ENCODE measurements at regions of chr1 and their contacts with region 1.

Region 1: DNA sequence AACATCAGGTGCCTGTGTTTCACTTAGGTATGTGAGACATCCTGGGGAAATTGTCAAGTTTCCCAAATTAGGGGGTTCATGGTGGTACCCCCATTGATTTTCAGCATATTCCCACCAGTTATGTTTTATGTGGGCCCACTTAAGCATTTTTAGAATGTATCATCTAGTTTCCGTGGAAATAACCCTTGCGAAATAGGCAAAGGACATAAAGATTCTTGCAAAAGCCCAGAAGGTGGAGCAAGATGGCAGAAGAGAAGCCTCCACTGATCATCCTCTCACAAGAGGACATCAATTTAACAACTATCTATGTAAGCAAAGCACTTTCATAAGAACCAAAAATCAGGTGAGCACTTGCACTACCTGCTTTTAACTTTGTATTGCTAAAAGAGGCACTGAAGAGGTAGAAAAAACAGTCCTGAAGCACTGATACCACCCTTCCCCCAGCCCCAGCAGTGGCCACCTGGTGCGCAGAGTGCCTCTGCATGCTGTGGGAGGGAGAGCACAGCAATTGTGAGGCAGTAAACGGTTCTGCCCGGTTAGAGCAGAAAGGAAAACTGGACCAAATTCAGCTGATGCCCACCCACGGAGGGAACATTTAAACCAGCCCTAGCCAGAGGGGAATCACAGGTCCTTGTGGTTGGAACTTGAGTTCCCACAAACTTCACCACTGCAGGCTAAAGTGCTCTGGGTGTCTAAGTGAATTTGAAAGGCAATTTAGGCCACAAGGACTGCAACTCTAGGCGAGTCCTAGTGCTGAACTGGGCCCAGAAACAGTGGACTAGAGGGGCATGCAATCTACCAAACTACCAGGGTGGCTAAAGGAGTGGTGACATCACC is 23.2 kb downstream of the MCOLN2 start:
- DNase-seq: peak; percentile 41
- ATAC-seq: no peak
- H3K4me3 Mint-ChIP-seq: no peak overlapping the region
- H3K27ac Mint-ChIP-seq: peak overlapping the region; percentile 35
- H3K4me1 Mint-ChIP-seq: peaks cover 60% of the 10 kb centered on the region
- H3K27me3 Mint-ChIP-seq: no peaks in the 10 kb centered on the region

Region 2: DNA sequence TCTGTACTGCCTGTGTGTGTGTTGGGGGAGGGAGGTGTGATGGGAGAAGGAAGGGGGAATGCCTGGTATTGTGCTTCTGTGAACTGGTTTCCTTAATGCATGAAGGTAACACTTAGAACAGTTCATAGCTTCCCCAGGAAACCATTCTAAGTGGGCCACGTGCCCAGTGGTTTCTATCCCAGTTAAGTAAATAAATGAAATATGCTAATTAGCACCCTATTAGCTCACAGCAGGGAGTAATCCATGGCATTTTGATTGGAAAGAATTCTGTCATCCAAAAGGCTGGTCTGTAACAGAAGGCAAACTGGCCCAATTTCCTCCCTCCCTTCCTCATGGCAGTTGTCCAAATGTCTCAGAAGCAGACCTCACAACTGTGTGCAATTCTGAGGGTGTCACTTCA is 1174.1 kb before region 1 on chr1:
- CTCF ChIA-PET with region 1: no interaction called
- POLR2A ChIA-PET with region 1: no interaction called
- intact Hi-C with region 1: no loop called
- DNase-seq: no peak
- ATAC-seq: no peak
- H3K4me3 Mint-ChIP-seq: no peak overlapping the region
- H3K27ac Mint-ChIP-seq: no peak overlapping the region
- H3K4me1 Mint-ChIP-seq: no peaks in the 10 kb centered on the region
- H3K27me3 Mint-ChIP-seq: no peaks in the 10 kb centered on the region

Region 3: DNA sequence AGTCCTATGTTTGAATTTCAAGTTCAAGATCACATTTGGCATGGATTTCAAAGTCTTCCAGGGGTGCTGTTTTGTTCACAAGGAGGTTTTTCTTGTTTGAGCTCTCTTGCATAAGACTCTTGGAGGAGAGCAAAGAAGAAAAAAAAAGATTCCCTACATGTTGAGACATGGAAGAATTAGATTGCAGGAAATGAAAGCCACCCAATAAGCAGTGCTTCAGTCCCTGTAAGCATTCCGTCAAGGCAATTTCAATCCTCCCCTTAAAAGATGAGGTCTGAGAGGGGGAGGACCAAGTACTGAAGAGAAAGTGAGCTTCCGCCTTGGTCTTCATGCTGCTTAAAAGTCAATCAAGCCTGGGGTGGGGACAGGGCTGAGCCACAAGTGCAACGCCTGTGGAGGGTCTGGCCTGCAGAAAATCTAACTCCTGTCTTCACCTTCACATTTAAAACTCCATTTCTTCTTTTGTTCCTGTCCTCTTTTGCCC is 130.9 kb before region 1 on chr1:
- CTCF ChIA-PET with region 1: no interaction called
- POLR2A ChIA-PET with region 1: no interaction called
- intact Hi-C with region 1: no loop called
- DNase-seq: no peak
- ATAC-seq: no peak
- H3K4me3 Mint-ChIP-seq: no peak overlapping the region
- H3K27ac Mint-ChIP-seq: no peak overlapping the region
- H3K4me1 Mint-ChIP-seq: peaks cover 8% of the 10 kb centered on the region
- H3K27me3 Mint-ChIP-seq: no peaks in the 10 kb centered on the region

Region 4: DNA sequence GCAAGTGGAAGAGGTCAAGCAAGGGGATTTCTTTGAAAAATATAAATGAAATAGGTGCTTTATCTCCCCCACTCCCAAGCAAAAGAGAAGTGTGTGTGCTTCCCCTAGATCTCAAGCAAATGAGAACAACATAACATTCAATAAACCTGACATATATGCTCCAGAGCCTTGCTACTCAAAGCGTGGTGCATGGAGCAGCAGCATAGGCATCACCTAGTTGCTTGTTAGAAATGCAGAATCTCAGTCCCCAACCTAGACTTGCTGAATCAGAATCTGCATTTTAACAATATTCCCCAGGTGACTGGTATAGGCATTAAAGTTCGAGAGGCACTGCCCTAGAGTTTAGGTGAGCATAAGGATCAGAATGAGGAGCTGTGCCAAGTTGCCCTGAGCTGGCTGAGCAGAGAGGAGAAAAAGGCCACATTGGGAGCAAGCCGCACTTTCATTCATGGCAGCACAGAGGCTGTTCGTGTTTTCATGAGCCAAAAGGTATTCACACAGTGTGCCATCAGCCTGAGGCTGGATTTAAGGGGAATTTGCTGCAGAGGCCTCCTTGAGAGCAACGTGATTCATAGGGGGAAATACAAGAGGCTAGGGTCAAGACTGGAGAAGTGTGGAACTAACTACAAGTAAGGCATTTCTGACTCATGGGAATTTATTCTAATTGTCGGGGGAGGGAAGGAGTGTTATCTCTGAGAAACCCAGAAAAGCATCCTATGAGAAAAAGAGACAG is 66.5 kb before region 1 on chr1:
- CTCF ChIA-PET with region 1: no interaction called
- POLR2A ChIA-PET with region 1: no interaction called
- intact Hi-C with region 1: no loop called
- DNase-seq: no peak
- ATAC-seq: peak; percentile 68
- H3K4me3 Mint-ChIP-seq: no peak overlapping the region
- H3K27ac Mint-ChIP-seq: no peak overlapping the region
- H3K4me1 Mint-ChIP-seq: peaks cover 7% of the 10 kb centered on the region
- H3K27me3 Mint-ChIP-seq: no peaks in the 10 kb centered on the region

Region 5: GRCh38 chr1:84985365-84985764 is 11.6 kb after region 1 on chr1:
- CTCF ChIA-PET with region 1: interaction called, 21 read pairs
- POLR2A ChIA-PET with region 1: no interaction called
- intact Hi-C with region 1: no loop called
- DNase-seq: no peak
- ATAC-seq: no peak
- H3K4me3 Mint-ChIP-seq: no peak overlapping the region
- H3K27ac Mint-ChIP-seq: no peak overlapping the region
- H3K4me1 Mint-ChIP-seq: peaks cover 24% of the 10 kb centered on the region
- H3K27me3 Mint-ChIP-seq: no peaks in the 10 kb centered on the region